ENCODE measurements at regions of chr6 and their contacts with region 1.

Region 1: GRCh38 chr6:15062516-15063252 is 183.2 kb upstream of the JARID2 start:
- DNase-seq: peak in 1 of 2 experiments; percentile 86
- H3K4me3 ChIP-seq: no peak overlapping the region
- H3K27ac ChIP-seq: no peak overlapping the region
- H3K4me1 ChIP-seq: peaks cover 7% of the 10 kb centered on the region; the same call in 1 of the 2 replicates
- H3K27me3 ChIP-seq: no peaks in the 10 kb centered on the region
- CTCF ChIP-seq: no peak

Region 2: GRCh38 chr6:15458021-15458459 is 395.4 kb after region 1 on chr6:
- CTCF ChIA-PET with region 1: no interaction called
- POLR2A ChIA-PET with region 1: no interaction called
- intact Hi-C with region 1: loop called (anchors 5 kb)
- DNase-seq: no peak
- H3K4me3 ChIP-seq: no peak overlapping the region
- H3K27ac ChIP-seq: no peak overlapping the region
- H3K4me1 ChIP-seq: peaks cover 35% of the 10 kb centered on the region
- H3K27me3 ChIP-seq: no peaks in the 10 kb centered on the region
- CTCF ChIP-seq: no peak